Caco-2 (cell line): ENCODE measurements at regions of chr3 and their contacts with region 1.

Region 1: GRCh38 chr3:41026394-41027177 is 172.7 kb upstream of the CTNNB1 start:
- DNase-seq: peak in 1 of 2 experiments; percentile 9
- H3K4me3 ChIP-seq: no peak overlapping the region
- H3K4me3 Mint-ChIP-seq: no peak overlapping the region
- H3K27ac Mint-ChIP-seq: no peak overlapping the region
- H3K4me1 ChIP-seq: 0 out of 2 replicates have a peak, but pooled peaks cover 4% of the 10 kb centered on the region
- H3K4me1 Mint-ChIP-seq: no peaks in the 10 kb centered on the region
- H3K27me3 ChIP-seq: no peaks in the 10 kb centered on the region
- H3K27me3 Mint-ChIP-seq: no peaks in the 10 kb centered on the region
- CTCF ChIP-seq: no peak

Region 2: DNA sequence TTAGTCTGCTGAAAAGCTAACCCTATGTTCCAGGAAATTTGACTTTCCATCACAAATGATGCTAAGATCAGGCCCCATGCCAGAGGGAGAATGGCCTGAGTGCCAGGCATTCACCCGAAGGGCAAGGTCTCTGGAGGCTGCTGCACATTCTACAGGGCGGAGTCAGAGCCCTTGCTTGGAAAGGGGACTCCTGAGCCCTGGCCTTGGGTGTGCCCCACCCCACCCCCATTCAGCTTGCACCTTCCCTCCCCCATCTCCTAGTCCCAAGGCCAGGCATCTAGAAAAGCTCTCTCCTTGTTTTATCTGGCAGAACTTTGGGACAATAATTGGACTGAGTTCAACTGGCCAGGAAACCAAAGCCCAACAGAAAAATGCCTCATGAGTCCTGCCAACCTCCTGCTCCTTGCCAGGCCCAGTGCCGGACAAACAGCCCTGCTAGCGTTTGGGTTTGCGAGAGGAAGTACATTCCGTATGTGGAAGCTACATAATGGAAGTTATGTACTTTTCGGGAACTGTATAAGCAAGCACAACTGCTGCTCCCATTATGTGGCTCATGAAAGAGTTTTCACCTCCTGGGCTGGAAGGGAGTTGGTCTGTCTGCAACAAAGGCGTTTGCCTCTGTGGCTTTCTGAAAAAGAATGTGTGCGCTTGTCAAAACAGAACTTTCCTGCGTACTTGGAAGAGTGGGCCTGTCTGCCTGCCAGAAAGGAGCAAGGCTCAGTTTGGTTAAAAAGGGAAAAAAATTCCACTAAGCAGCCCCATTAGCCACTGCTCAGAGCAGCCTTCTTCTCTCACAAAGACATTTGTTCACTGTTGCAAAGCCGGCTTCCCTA is 148.7 kb before region 1 on chr3:
- CTCF ChIA-PET with region 1: no interaction called
- POLR2A ChIA-PET with region 1: no interaction called
- intact Hi-C with region 1: no loop called
- DNase-seq: no peak
- H3K4me3 ChIP-seq: no peak overlapping the region
- H3K4me3 Mint-ChIP-seq: no peak overlapping the region
- H3K27ac Mint-ChIP-seq: no peak overlapping the region
- H3K4me1 ChIP-seq: peaks cover 10% of the 10 kb centered on the region
- H3K4me1 Mint-ChIP-seq: peaks cover 16% of the 10 kb centered on the region
- H3K27me3 ChIP-seq: no peaks in the 10 kb centered on the region; the same call in 1 of the 2 replicates
- H3K27me3 Mint-ChIP-seq: no peaks in the 10 kb centered on the region
- CTCF ChIP-seq: no peak

Region 3: GRCh38 chr3:41064070-41064469 is 37.5 kb after region 1 on chr3:
- CTCF ChIA-PET with region 1: no interaction called
- POLR2A ChIA-PET with region 1: no interaction called
- intact Hi-C with region 1: loop called (anchors 1 kb)
- DNase-seq: peak in 1 of 2 experiments; percentile 4
- H3K4me3 ChIP-seq: no peak overlapping the region
- H3K4me3 Mint-ChIP-seq: no peak overlapping the region
- H3K27ac Mint-ChIP-seq: no peak overlapping the region
- H3K4me1 ChIP-seq: no peaks in the 10 kb centered on the region
- H3K4me1 Mint-ChIP-seq: no peaks in the 10 kb centered on the region
- H3K27me3 ChIP-seq: no peaks in the 10 kb centered on the region
- H3K27me3 Mint-ChIP-seq: no peaks in the 10 kb centered on the region
- CTCF ChIP-seq: no peak